Activated B cell treated with CpG ODN at 0.5 μM for 24 hours (primary cell): ENCODE measurements at regions of chr9 and their contacts with region 1.

Region 1: DNA sequence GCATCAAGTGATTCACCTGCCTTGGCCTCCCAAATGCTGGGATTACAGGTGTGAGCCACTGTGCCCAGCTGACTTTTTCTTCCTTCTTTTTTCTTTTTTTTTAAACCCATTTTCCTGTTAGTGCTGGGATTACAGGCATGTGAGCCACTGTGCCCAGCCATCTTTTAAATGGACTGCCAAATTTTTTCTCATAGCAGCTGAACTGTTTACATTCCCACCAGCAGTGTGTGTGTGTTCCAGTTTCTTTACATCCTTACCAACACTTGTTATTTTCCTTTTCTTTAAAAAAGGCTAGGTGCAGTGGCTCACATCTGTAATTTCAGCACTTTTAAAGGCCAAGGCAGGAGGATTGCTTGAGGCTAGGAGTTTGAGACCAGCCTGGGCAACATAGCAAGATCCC is 76.9 kb downstream of the UBE2R2 start:
- DNase-seq: no peak
- ATAC-seq: no peak
- H3K4me3 Mint-ChIP-seq: no peak overlapping the region
- H3K27ac Mint-ChIP-seq: no peak overlapping the region
- H3K4me1 Mint-ChIP-seq: peaks cover 4% of the 10 kb centered on the region
- H3K27me3 Mint-ChIP-seq: no peaks in the 10 kb centered on the region
- CTCF ChIP-seq: no peak

Region 2: DNA sequence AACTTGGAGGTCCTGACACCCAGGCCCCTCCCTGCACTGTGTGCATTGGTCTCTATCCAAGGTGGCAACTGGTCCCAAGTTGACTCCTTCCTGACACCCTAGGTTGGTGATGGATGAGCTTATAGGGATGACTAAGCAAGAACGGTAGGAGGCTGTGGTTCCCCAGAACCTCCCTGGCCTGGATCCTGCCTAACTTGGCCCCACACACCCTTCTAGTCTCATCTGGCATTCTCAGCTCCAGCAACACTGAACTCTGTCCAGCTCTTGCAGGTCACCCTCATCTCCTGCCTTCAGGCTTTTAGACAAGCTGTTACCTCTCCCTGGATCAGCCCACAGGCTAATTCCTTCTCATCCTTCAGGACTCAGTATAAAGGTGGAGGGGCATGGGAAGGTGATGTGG is 462.9 kb before region 1 on chr9:
- CTCF ChIA-PET with region 1: no interaction called
- POLR2A ChIA-PET with region 1: no interaction called
- intact Hi-C with region 1: no loop called
- DNase-seq: no peak
- ATAC-seq: no peak
- H3K4me3 Mint-ChIP-seq: no peak overlapping the region
- H3K27ac Mint-ChIP-seq: no peak overlapping the region
- H3K4me1 Mint-ChIP-seq: no peaks in the 10 kb centered on the region
- H3K27me3 Mint-ChIP-seq: peaks cover 5% of the 10 kb centered on the region
- CTCF ChIP-seq: no peak

Region 3: DNA sequence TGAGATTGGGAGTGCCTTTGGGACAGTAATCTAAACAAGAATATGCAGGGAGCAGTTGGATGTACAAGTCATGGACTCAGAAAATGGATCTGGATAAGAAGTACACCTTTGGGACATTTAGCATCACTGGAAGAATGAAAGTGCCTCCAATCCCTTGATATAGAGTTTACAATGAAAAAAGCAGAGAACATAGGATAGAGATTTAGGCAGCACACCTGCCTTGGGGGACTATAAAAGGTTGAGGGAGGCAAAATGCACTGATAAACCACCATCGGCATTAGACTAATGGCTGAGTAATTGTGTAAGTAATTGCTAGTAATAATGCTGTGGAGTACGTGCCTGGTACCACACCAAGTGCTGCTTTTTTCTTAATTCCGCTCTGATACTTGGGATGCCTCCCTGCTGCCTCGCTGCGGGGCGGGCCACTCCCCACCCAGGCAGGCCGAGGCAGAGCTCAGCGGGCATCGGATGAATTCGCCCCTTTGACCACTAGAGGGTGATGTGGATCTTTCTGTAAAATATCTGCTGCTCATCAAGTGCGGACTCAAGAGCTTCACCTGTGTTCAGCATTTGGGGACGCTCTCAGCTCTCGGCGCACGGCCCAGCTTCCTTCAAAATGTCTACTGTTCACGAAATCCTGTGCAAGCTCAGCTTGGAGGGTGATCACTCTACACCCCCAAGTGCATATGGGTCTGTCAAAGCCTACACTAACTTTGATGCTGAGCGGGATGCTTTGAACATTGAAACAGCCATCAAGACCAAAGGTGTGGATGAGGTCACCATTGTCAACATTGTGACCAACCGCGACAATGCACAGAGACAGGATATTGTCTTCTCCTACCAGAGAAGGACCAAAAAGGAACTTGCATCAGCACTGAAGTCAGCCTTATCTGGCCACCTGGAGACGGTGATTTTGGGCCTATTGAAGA is 269.9 kb before region 1 on chr9:
- CTCF ChIA-PET with region 1: no interaction called
- POLR2A ChIA-PET with region 1: no interaction called
- intact Hi-C with region 1: no loop called
- DNase-seq: peak; percentile 45
- ATAC-seq: peak; percentile 92
- H3K4me3 Mint-ChIP-seq: no peak overlapping the region
- H3K27ac Mint-ChIP-seq: no peak overlapping the region
- H3K4me1 Mint-ChIP-seq: peaks cover 4% of the 10 kb centered on the region
- H3K27me3 Mint-ChIP-seq: peaks cover 33% of the 10 kb centered on the region
- CTCF ChIP-seq: no peak

Region 4: DNA sequence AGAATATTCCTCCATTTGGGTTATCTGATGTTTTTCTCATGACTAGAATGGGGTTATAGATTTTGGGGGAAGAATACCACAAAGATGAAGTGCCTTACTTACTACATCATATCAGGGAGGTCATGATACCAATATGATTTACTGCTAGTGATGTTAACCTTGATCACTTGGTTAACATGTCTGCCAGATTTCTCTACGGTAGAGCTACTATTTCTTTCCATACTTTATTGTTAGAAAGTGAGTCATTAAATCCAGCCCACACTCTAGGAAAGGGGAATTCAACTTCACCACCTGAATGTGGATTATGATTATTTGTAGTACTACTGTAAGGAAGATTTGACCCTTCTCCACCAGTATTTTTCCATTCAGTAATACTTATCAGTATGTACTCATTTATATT is 12.2 kb before region 1 on chr9:
- CTCF ChIA-PET with region 1: interaction called, 3 read pairs
- POLR2A ChIA-PET with region 1: no interaction called
- intact Hi-C with region 1: loop called (anchors 2 kb)
- DNase-seq: no peak
- ATAC-seq: no peak
- H3K4me3 Mint-ChIP-seq: no peak overlapping the region
- H3K27ac Mint-ChIP-seq: no peak overlapping the region
- H3K4me1 Mint-ChIP-seq: peaks cover 48% of the 10 kb centered on the region
- H3K27me3 Mint-ChIP-seq: no peaks in the 10 kb centered on the region
- CTCF ChIP-seq: no peak

Region 5: DNA sequence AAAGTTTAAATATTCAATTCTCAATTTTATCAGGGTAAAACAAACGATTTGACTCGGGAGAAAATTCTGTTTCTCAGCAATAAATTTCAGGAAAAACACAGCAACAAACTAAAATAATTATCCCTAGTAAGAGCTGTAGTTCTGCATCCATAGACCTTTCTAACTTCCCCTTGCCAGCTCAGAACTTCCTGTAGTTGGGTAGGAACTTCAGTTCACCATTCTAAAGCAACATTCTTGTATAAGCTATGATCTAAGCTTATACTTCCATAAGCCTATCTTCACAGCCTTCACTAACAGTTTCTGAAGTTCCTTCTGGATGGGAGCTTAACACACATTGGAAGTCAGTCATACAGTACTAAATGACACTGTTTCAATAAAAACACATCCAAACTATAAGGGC is 58.2 kb after region 1 on chr9:
- CTCF ChIA-PET with region 1: no interaction called
- POLR2A ChIA-PET with region 1: no interaction called
- intact Hi-C with region 1: loop called (anchors 10 kb)
- DNase-seq: no peak
- ATAC-seq: no peak
- H3K4me3 Mint-ChIP-seq: no peak overlapping the region
- H3K27ac Mint-ChIP-seq: no peak overlapping the region
- H3K4me1 Mint-ChIP-seq: no peaks in the 10 kb centered on the region
- H3K27me3 Mint-ChIP-seq: no peaks in the 10 kb centered on the region
- CTCF ChIP-seq: no peak